Posterior cingulate gyrus (tissue), 11 donors: ENCODE measurements at regions of chr5 and their contacts with region 1.

Region 1: DNA sequence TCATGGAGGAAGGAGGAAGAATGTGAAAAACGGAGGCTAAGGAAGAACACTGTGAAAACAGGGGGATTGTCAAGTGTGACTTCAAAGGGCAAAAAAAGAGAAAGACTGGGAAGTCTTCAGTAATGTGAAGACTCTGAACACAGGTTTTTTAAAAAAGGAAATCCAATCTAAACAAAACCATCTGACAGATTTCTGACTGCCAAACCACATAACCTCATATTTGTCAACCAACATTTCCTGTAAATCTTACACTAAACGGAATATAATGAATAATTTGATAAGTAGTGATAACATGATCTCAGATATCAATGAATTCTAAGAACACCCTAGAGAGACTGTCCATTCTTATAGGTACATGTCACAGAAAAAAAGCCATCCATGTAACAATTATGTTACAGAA is 124.7 kb downstream of the FBN2 start:
- DNase-seq: no peak

Region 2: DNA sequence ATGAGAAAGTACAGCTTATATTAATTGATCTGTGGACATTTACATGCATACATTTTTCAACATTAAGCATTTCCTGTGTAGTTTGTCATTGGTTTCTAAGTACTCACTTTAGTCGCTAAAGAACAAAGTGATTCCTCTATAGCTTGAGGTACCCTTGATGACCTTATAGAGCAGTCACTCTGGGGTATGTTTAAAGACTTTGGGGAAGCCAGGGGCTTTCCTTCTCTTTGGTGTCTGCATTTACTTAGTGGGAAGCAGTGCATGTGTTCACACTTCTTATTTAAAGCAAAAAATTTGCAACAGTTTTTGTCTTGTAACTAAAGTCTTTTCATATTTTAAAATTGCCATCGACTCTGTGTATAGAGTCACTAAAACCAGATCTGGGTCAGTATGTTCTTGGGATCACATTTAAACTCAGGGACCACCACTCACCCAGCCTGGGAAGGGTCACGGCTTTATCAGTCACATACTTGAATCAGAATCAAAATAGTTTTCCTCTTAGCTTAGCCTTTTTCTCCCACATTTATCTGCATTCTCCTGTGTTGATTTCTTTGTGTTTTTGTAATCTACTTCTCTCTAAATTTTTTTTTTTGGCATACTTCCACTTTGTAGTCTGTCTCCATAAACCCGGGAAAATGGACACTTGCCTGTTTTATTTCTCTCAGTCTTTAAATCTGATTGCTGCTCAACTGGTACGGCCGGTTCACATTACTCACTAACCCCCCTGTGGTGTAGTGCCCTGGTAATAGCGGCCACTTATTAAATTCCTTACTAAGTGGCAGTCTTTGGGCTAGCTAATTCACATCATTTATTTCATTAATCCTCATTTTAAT is 268.6 kb after region 1 on chr5:
- intact Hi-C with region 1: loop called (anchors 10 kb)
- DNase-seq: no peak